ENCODE measurements at regions of chrX and their contacts with region 1.

Region 1: GRCh38 chrX:13482746-13483145 is 86.7 kb upstream of the EGFL6 start:
- DNase-seq: no peak
- H3K4me3 ChIP-seq: no peak overlapping the region
- H3K27ac ChIP-seq: no peak overlapping the region
- H3K4me1 ChIP-seq: peaks cover 2 to 18% (median 12%) of the 10 kb centered on the region in 4 donors
- H3K27me3 ChIP-seq: no peaks in the 10 kb centered on the region
- CTCF ChIP-seq: no peak
- EP300 ChIP-seq: no peak
- POLR2A ChIP-seq: no peak

Region 2: GRCh38 chrX:12955882-12956703 is 526.7 kb before region 1 on chrX:
- intact Hi-C with region 1: loop called (anchors 5 kb)
- DNase-seq: peak; percentile 63 to 70
- H3K4me3 ChIP-seq: no peak overlapping the region
- H3K27ac ChIP-seq: peak overlapping the region; percentile 71 to 89 (median 80)
- H3K4me1 ChIP-seq: peaks cover 0 to 23% (median 15%) of the 10 kb centered on the region in 4 donors
- H3K27me3 ChIP-seq: no peaks in the 10 kb centered on the region
- CTCF ChIP-seq: no peak
- EP300 ChIP-seq: no peak
- POLR2A ChIP-seq: no peak

Region 3: DNA sequence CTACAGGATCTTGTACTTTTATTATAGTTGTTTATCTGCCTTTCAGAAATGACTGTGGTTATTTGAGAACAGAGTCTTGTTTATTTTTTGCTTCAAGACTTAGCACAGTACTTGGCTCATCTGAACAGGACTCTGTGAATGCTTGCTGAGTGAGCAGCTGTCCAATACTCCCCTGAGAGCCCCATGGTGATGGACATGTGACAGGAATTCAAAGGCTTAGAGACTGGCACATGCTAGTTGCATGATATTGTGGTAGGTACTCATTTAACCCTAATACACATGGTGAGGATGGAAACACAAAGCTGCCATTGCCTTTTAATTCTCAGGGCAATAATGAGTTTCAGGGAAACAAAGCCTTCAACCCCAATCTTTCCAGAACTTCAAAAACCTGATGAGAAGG is 449.7 kb after region 1 on chrX:
- intact Hi-C with region 1: no loop called
- DNase-seq: no peak
- H3K4me3 ChIP-seq: no peak overlapping the region
- H3K27ac ChIP-seq: no peak overlapping the region
- H3K4me1 ChIP-seq: peaks cover 0 to 4% (median 0%) of the 10 kb centered on the region in 4 donors
- H3K27me3 ChIP-seq: peaks cover 0 to 3% (median 0%) of the 10 kb centered on the region in 3 donors
- CTCF ChIP-seq: no peak
- EP300 ChIP-seq: no peak
- POLR2A ChIP-seq: no peak

Measured in stomach (tissue), 19 donors.